Aorta (tissue), 5 donors: ENCODE measurements at regions of chr2 and their contacts with region 1.

Region 1: DNA sequence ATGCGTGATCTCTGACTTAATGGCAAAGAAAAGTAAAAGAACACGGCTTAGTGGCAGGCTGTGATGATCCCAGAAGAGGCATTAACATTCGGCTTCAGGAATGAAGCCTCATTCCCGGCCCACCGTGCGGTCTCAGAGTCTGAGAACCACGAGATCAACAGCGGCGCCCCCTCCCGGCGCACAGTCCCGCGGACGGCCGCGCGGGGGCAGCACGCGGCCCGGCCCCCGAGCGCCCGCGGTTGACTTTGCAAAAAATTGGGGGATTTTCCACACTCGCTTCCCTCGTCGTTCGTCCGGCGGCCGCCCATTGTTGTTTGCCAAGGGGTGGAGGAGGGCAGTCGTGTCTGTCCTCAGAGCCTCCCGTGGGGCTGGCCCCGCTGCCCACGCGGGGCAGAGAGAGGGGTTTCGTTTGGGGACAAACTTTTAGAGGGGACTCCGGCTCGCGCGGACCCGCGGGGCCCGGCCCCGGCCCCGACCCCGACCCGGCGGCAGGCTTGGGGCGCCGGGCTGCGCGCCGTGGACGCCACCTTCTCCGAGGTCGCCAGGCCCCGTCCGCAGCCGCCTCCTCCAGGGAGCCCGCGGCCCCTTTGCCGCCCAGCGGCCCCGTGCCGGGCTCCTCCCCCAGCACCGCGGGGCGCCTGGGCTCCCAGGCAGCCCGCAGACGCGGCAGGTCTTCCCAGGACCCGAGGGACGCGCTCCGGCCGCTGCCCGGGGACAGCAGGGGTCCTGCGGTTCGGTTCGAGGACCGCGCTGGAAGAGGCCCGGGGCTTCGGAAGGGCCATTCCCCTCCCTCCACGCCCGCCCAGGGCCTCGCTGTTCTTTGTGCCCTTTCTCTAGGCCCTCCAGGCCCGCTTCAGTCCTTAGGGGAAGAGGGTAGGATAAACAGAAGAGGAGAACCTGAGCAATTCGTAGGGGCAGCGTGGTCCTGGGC is 3.4 kb upstream of the HS6ST1 start:
- DNase-seq: peak; percentile 91 to 96
- ATAC-seq: peak; percentile 89
- H3K4me3 ChIP-seq: peak overlapping the region; percentile 40 to 71
- H3K27ac ChIP-seq: peak overlapping the region in 1 of 2 donors; percentile 23
- H3K4me1 ChIP-seq: no peaks in the 10 kb centered on the region
- H3K27me3 ChIP-seq: no peaks in the 10 kb centered on the region

Region 2: DNA sequence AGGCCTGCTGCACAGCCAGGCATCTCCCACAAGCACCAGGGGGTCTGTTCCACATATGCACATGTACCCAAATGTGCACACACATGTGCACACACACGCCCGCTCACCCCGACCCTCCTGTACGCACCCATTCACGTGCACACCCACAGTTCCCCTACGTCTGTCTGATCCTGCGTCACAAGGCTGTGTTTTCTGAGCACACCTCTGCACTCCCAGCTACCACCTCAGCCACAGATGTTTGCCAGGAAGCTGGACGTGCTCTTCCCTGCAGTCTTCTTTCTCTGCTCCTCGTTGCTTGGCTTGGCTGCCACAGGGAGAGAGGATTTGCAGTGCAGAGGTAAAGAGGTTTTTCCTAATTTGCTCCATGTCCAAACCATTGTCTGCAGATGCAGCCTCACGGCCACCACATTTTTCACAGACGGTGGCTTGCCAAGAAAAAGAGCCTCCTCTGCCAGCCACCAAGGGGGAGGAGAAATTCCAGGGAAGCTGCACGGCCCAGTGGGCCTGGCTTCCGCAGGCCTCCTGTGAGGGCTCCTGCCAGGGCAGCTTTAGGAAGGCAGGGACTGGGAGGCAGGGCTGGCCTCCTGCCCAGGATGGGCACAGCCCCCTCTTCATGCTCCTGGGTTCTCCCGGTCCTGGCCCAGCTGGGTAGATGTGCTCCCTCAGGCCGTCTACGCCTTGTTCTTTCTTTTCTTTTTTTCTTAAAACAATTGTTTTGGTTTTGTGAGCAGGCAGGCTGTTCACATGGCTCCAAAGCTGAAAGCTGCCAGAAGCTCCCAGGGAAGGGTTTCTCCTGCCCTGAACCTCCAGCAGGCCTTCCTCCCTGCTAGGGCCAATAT is 25.9 kb after region 1 on chr2:
- intact Hi-C with region 1: loop called in 1 of 2 experiments (anchors 2 kb)
- DNase-seq: peak; percentile 85 to 86
- ATAC-seq: peak; percentile 91
- H3K4me3 ChIP-seq: no peak overlapping the region
- H3K27ac ChIP-seq: peak overlapping the region in 1 of 2 donors; percentile 72
- H3K4me1 ChIP-seq: peaks cover 0 to 7% of the 10 kb centered on the region in 2 donors
- H3K27me3 ChIP-seq: no peaks in the 10 kb centered on the region

Region 3: GRCh38 chr2:128379021-128380015 is 57.3 kb after region 1 on chr2:
- intact Hi-C with region 1: loop called in 1 of 2 experiments (anchors 5 kb)
- DNase-seq: peak in 1 of 2 donors; percentile 74
- ATAC-seq: peak; percentile 61
- H3K4me3 ChIP-seq: no peak overlapping the region
- H3K27ac ChIP-seq: no peak overlapping the region
- H3K4me1 ChIP-seq: no peaks in the 10 kb centered on the region
- H3K27me3 ChIP-seq: no peaks in the 10 kb centered on the region

Region 4: DNA sequence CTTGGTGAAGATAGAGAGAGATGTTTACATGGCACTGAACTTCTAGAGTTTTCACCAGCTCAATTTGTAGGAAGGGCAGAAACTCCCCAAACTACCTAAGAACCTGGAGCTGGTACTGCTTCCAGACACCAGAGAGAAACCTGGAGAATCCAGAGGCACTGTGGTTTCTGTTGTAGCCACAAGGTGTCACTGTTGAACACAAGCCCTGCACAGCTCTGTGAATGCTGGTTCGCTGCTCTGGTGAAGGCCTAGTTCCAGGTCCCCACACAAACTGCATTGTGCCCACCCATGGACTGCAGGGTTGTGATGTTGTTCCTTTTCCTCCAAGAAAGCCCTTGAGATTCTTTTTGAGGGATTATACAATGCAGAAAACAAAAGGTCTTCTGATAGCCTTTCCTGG is 147.2 kb after region 1 on chr2:
- intact Hi-C with region 1: loop called (anchors 5 kb)
- DNase-seq: no peak
- ATAC-seq: no peak
- H3K4me3 ChIP-seq: no peak overlapping the region
- H3K27ac ChIP-seq: no peak overlapping the region
- H3K4me1 ChIP-seq: no peaks in the 10 kb centered on the region
- H3K27me3 ChIP-seq: no peaks in the 10 kb centered on the region

Region 5: GRCh38 chr2:129877289-129877779 is 1555.3 kb after region 1 on chr2:
- intact Hi-C with region 1: loop called in 1 of 2 experiments (anchors 10 kb)
- DNase-seq: peak; percentile 95 to 97
- ATAC-seq: peak; percentile 90
- H3K4me3 ChIP-seq: peak overlapping the region; percentile 36 to 56
- H3K27ac ChIP-seq: peak overlapping the region in 1 of 2 donors; percentile 28
- H3K4me1 ChIP-seq: no peaks in the 10 kb centered on the region
- H3K27me3 ChIP-seq: no peaks in the 10 kb centered on the region